Left lung (tissue), 14 donors: ENCODE measurements at regions of chr12 and their contacts with region 1.

Region 1: GRCh38 chr12:105420659-105421240 is 90.3 kb downstream of the C12orf75 start:
- DNase-seq: peak in 3 of 4 donors; percentile 50 to 80 (median 51)
- ATAC-seq: peak; percentile 94
- H3K4me3 ChIP-seq: no peak overlapping the region
- H3K27ac ChIP-seq: no peak overlapping the region
- H3K4me1 ChIP-seq: no peaks in the 10 kb centered on the region
- H3K27me3 ChIP-seq: no peaks in the 10 kb centered on the region
- CTCF ChIP-seq: peak; percentile 84 to 89

Region 2: DNA sequence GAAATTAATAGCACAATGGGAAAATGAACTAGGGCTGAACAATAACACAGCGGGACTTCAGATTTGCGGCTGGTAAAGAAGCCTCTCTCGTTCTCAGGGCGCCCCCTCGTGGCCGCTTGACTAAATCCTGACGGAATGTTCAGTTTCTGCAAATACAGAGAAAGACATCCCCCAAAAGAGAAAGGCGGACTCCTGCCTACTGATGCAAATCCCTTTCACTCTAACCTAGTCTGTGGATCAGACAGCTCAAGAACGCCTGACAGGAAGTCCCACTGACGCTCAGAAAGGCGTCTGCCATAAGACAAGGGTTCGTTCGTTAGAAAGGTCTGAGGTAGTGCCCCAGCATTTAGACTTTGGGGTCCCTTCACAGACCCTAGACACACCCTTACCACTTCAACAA is 715.5 kb after region 1 on chr12:
- intact Hi-C with region 1: loop called in 1 of 2 experiments (anchors 5 kb)
- DNase-seq: peak; percentile 78 to 92 (median 84)
- ATAC-seq: peak; percentile 58
- H3K4me3 ChIP-seq: peak overlapping the region; percentile 45 to 53
- H3K27ac ChIP-seq: peak overlapping the region; percentile 11 to 65
- H3K4me1 ChIP-seq: peaks cover 17 to 39% of the 10 kb centered on the region in 2 donors
- H3K27me3 ChIP-seq: peaks cover 9 to 63% of the 10 kb centered on the region in 2 donors
- CTCF ChIP-seq: peak; percentile 76 to 77